Astrocyte of the cerebellum (primary cell): ENCODE measurements at regions of chr7 and their contacts with region 1.

Region 1: GRCh38 chr7:28364082-28364481 is 48.2 kb upstream of the CREB5 start:
- DNase-seq: no peak
- H3K4me3 ChIP-seq: no peak overlapping the region
- CTCF ChIP-seq: peak; percentile 11

Region 2: DNA sequence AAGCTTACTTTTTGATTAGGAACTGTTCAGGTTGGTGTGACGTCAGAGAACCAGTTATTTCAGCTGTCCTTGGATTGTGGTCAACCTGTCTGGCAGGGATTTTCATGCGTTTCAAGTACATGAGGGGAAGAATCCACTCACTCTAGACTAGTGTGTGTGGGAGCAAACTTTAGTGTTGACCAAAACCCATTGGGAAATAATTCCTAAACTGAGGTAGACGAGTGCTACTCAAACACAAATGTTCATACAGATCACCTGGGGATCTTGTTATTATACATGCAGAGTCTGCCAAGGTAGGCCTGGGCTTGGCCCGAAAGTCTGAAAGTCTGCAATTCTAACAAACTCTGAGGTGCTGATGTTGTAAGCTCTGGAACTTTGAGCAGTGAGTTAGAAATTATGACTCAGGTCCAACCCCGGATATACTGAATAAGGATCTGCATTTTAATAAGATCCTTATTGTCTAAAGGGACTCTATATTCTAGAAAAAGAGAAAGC is 62.9 kb before region 1 on chr7:
- in situ Hi-C with region 1: no loop called
- DNase-seq: peak; percentile 24
- H3K4me3 ChIP-seq: no peak overlapping the region
- CTCF ChIP-seq: no peak

Region 3: GRCh38 chr7:28400838-28401360 is 36.8 kb after region 1 on chr7:
- in situ Hi-C with region 1: loop called (anchors 5 kb)
- DNase-seq: no peak
- H3K4me3 ChIP-seq: no peak overlapping the region
- CTCF ChIP-seq: no peak